ENCODE measurements at regions of chr15 and their contacts with region 1.

Region 1: DNA sequence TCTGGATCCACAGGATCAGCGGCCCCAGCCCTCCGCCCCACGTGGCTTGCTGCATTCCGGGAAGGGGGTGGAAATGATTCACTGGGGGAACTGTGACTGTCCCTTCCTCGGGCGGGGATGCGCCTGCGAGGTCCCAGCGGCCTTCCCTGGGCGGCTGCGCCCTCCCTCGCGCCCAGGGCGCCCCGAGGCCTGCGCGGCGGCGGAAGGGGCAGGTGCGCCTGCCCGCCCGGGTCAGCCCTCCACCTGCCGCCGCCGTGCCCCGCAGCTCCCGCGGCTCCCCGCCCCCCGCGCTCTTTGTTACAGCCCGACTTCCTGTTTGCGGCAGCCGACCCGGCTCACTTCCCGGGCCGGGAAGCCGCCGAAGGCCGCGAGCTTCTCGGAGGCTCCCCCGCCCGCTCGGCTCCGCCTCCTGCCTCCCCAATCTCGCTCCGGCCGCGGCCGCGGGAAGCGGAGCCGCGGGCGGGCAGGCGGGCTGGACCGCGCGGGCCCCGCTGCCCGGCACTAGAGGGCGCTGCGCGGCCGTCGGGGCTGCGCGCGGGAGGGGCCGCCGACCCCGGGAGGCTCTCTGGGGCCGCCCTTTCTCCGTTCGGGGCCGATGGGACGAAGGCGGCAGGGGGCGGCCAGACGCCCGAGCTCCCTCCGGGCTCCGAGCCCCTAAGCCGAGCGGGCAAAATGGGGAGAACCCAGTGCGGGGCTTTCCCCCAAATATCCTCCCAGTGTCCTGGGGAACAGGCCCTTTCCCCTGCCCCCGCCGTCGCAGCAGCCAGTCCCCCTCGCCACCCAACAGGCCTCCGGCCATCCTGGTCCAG is 11.5 kb upstream of the CHAC1 start:
- DNase-seq: peak; percentile 83 to 88
- ATAC-seq: peak; percentile 64 to 81 (median 72)
- H3K4me3 ChIP-seq: peak overlapping the region; percentile 71
- H3K27ac ChIP-seq: peak overlapping the region; percentile 73
- H3K4me1 ChIP-seq: peaks cover 30% of the 10 kb centered on the region
- H3K27me3 ChIP-seq: no peaks in the 10 kb centered on the region
- CTCF ChIP-seq: peak; percentile 80

Region 2: DNA sequence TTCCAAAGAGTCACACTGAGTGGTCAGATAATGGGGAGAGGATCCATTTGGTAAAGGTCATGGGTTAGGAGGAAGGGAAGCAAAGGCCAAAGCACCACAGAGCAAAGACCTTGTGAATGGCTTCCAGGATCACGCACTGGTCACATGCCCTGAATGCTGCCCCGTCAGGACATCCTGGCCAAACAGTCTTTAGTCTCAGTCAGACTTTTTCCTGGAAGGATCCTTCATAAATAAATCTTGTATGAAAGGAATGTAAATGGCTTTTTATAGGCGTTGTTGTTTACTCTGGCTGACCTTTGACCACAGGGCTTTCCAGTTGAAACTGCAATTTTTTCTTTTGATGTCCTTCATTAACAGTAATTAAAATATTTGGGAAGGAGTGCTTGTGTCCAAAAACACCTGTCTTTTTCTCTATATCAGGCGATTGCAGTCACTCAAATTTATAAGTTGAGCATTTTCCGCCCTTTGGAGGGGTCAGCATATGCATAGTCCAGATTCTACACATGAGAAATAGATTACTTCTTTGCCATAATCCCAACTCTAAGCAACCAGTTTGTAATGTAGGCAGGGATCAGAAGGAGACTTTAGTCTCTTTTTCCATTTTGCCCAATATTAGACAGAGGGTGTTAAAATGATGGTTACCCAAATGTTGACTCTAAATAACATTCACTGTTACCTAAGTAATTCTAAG is 59.9 kb after region 1 on chr15:
- intact Hi-C with region 1: no loop called
- DNase-seq: no peak
- ATAC-seq: peak in 3 of 4 donors; percentile 72 to 87 (median 81)
- H3K4me3 ChIP-seq: no peak overlapping the region
- H3K27ac ChIP-seq: no peak overlapping the region
- H3K4me1 ChIP-seq: peaks cover 17% of the 10 kb centered on the region
- H3K27me3 ChIP-seq: no peaks in the 10 kb centered on the region
- CTCF ChIP-seq: no peak

Region 3: DNA sequence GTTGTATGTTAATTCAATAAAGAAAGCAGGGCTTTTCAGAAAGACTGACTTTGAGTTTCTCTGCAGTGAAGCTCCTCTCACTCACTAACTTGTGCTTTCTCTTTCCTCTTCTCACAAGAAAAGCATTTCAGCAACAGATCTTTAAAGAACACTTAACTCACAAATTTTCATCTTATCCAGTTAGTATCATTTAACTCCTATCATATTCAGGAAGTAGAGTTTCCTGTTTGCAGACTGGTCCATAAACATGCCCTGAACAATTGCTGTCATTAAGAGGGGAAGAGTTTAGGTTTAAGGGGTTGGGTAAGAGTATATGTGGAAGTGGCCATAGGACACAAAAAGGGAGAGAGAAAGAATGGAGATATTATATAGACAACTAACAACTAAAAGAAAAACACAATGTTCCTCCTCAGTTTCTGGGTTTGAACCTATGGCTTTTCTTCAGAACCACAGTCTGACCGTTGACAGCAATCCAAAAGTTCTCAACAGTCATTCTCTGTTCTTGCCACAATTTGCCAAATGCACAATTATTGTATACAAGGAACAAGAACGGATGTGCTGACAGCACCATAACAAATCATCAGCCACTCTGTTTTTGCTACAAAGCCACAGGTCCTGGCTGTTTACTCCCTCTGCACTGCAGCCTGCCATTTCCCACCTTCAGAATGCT is 75.5 kb after region 1 on chr15:
- intact Hi-C with region 1: loop called (anchors 2 to 5 kb)
- DNase-seq: no peak
- ATAC-seq: no peak
- H3K4me3 ChIP-seq: no peak overlapping the region
- H3K27ac ChIP-seq: no peak overlapping the region
- H3K4me1 ChIP-seq: peaks cover 15% of the 10 kb centered on the region
- H3K27me3 ChIP-seq: no peaks in the 10 kb centered on the region
- CTCF ChIP-seq: no peak

Region 4: GRCh38 chr15:41022487-41023090 is 80.9 kb after region 1 on chr15:
- intact Hi-C with region 1: loop called (anchors 2 to 5 kb)
- DNase-seq: no peak
- ATAC-seq: peak; percentile 61 to 78 (median 72)
- H3K4me3 ChIP-seq: no peak overlapping the region
- H3K27ac ChIP-seq: no peak overlapping the region
- H3K4me1 ChIP-seq: peaks cover 10% of the 10 kb centered on the region
- H3K27me3 ChIP-seq: no peaks in the 10 kb centered on the region
- CTCF ChIP-seq: peak; percentile 68

Region 5: GRCh38 chr15:41051139-41051538 is 109.4 kb after region 1 on chr15:
- intact Hi-C with region 1: no loop called
- DNase-seq: no peak
- ATAC-seq: no peak
- H3K4me3 ChIP-seq: no peak overlapping the region
- H3K27ac ChIP-seq: no peak overlapping the region
- H3K4me1 ChIP-seq: no peaks in the 10 kb centered on the region
- H3K27me3 ChIP-seq: no peaks in the 10 kb centered on the region
- CTCF ChIP-seq: no peak